Activated CD4-positive, alpha-beta T cell treated with anti-CD3 and anti-CD28 coated beads for 36 hours (primary cell): ENCODE measurements at regions of chr6 and their contacts with region 1.

Region 1: GRCh38 chr6:14743465-14744211 is 502.2 kb upstream of the JARID2 start:
- DNase-seq: peak; percentile 92
- ATAC-seq: peak; percentile 84
- H3K4me3 Mint-ChIP-seq: peak overlapping the region; percentile 65
- H3K27ac Mint-ChIP-seq: peak overlapping the region; percentile 100
- H3K4me1 Mint-ChIP-seq: peaks cover 92% of the 10 kb centered on the region
- H3K27me3 Mint-ChIP-seq: no peaks in the 10 kb centered on the region

Region 2: GRCh38 chr6:14423330-14423729 is 320.3 kb before region 1 on chr6:
- CTCF ChIA-PET with region 1: no interaction called
- POLR2A ChIA-PET with region 1: no interaction called
- intact Hi-C with region 1: loop called in 1 of 2 experiments (anchors 1 kb)
- DNase-seq: no peak
- ATAC-seq: no peak
- H3K4me3 Mint-ChIP-seq: no peak overlapping the region
- H3K27ac Mint-ChIP-seq: peak overlapping the region; percentile 96
- H3K4me1 Mint-ChIP-seq: peaks cover 54% of the 10 kb centered on the region
- H3K27me3 Mint-ChIP-seq: no peaks in the 10 kb centered on the region

Region 3: DNA sequence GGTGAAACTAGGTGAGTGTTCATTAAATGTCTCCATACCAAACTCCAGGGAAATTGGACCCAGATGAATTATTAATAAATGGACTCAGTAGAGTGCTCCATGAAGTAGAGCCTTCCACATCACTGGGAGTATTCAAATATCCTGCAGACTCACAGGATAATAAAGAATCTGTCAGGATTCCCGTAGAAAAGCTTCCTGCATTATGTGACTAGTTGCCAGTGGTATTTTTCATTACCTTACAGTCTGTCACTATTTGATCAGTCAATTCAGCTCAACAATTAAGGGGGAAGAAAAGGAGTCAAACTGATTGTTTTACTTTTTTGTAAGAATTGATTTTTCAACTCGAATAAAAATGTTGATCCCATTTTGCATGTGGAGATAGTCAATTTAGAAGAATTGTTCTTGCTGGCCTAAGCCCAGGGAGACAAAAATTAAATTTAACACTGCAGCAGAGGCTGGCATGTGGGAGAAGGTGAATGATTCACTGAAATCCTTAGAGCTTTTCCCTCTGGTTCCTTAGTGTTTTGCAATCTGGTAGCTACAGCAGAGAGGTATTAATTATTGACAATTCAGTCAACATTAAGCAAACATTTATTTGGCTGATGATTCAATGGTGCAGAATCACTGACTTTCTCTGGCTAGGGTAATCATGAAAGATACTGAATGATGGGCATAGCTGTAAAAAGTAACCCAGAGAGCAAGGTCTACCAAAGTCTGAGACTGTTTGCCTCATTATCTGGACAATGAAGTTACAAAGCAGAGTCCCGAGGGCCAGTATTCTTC is 183.7 kb before region 1 on chr6:
- CTCF ChIA-PET with region 1: no interaction called
- POLR2A ChIA-PET with region 1: no interaction called
- intact Hi-C with region 1: no loop called
- DNase-seq: no peak
- ATAC-seq: no peak
- H3K4me3 Mint-ChIP-seq: no peak overlapping the region
- H3K27ac Mint-ChIP-seq: no peak overlapping the region
- H3K4me1 Mint-ChIP-seq: no peaks in the 10 kb centered on the region
- H3K27me3 Mint-ChIP-seq: no peaks in the 10 kb centered on the region

Region 4: GRCh38 chr6:14784596-14785492 is 41.2 kb after region 1 on chr6:
- CTCF ChIA-PET with region 1: no interaction called
- POLR2A ChIA-PET with region 1: no interaction called
- intact Hi-C with region 1: loop called in 1 of 2 experiments (anchors 5 kb)
- DNase-seq: peak; percentile 42
- ATAC-seq: peak; percentile 66
- H3K4me3 Mint-ChIP-seq: peak overlapping the region; percentile 38
- H3K27ac Mint-ChIP-seq: peak overlapping the region; percentile 81
- H3K4me1 Mint-ChIP-seq: peaks cover 43% of the 10 kb centered on the region
- H3K27me3 Mint-ChIP-seq: no peaks in the 10 kb centered on the region

Region 5: DNA sequence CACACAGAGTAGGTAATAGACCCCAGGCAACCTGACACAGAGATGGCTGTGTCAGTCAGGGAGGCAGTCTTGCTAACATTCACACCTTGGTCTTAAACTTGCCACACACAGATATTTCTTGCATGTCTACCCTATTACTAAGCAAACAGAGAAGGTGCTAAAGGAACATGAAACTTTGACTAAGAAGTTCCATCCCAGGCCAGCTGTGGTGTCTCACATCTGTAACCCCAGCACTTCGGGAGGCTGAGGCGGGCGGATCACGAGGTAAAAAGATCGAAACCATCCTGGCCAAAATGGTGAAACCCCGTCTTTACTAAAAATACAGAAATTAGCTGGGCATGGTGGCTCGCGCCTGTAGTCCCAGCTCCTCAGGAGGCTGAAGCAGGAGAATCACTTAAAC is 279.8 kb after region 1 on chr6:
- CTCF ChIA-PET with region 1: no interaction called
- POLR2A ChIA-PET with region 1: interaction called, 4 read pairs
- intact Hi-C with region 1: loop called in 1 of 2 experiments (anchors 1 kb)
- DNase-seq: peak; percentile 85
- ATAC-seq: peak; percentile 98
- H3K4me3 Mint-ChIP-seq: peak overlapping the region; percentile 37
- H3K27ac Mint-ChIP-seq: peak overlapping the region; percentile 89
- H3K4me1 Mint-ChIP-seq: peaks cover 22% of the 10 kb centered on the region
- H3K27me3 Mint-ChIP-seq: no peaks in the 10 kb centered on the region

Region 6: DNA sequence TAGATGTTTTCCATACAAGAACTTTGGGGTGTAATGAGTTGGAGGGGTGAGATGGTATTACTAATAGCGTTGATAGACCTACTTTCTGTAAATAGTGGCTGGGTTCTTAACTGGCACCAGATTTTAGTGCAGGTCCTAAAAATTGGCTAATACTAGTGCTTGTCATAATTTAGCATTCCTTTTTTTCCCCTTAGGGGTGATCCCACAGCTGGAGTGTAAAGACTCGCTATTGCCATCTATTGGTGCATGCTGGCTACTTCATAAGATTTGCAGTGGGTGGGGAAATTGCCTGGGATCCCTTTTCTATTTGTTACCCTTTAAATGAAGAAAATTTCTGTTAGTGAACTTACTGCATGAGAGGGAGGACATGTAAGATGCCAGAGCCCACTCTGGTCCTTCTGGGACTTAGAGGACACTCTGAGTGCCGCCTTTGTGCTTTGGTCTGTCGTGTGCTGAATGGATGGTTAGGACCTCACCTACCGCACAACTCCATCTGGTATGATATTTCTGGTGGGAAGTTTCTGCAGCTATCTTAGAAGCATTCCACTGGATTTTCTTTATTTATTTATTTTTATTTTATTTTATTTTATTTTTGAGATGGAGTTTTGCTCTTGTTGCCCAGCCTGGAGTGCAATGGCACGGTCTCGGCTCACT is 697.7 kb after region 1 on chr6:
- CTCF ChIA-PET with region 1: no interaction called
- POLR2A ChIA-PET with region 1: no interaction called
- intact Hi-C with region 1: loop called in 1 of 2 experiments (anchors 5 kb)
- DNase-seq: peak; percentile 49
- ATAC-seq: no peak
- H3K4me3 Mint-ChIP-seq: no peak overlapping the region
- H3K27ac Mint-ChIP-seq: no peak overlapping the region
- H3K4me1 Mint-ChIP-seq: peaks cover 73% of the 10 kb centered on the region
- H3K27me3 Mint-ChIP-seq: no peaks in the 10 kb centered on the region